ENCODE measurements at regions of chr2 and their contacts with region 1.

Region 1: GRCh38 chr2:210195101-210195852 is 24.1 kb upstream of the KANSL1L start:
- DNase-seq: no peak
- H3K4me3 ChIP-seq: peak overlapping the region in 3 of 4 donors; percentile 16 to 34 (median 18)
- H3K27ac ChIP-seq: no peak overlapping the region
- H3K4me1 ChIP-seq: peaks cover 0 to 14% (median 5%) of the 10 kb centered on the region in 4 donors
- H3K27me3 ChIP-seq: no peaks in the 10 kb centered on the region
- CTCF ChIP-seq: peak; percentile 61 to 76 (median 74)
- EP300 ChIP-seq: no peak
- POLR2A ChIP-seq: no peak

Region 2: GRCh38 chr2:209977386-209978239 is 217.7 kb before region 1 on chr2:
- intact Hi-C with region 1: loop called (anchors 1 kb)
- DNase-seq: no peak
- H3K4me3 ChIP-seq: no peak overlapping the region
- H3K27ac ChIP-seq: no peak overlapping the region
- H3K4me1 ChIP-seq: no peaks in the 10 kb centered on the region
- H3K27me3 ChIP-seq: peaks cover 0 to 4% (median 0%) of the 10 kb centered on the region in 4 donors
- CTCF ChIP-seq: peak; percentile 56 to 66 (median 65)
- EP300 ChIP-seq: no peak
- POLR2A ChIP-seq: no peak

Region 3: DNA sequence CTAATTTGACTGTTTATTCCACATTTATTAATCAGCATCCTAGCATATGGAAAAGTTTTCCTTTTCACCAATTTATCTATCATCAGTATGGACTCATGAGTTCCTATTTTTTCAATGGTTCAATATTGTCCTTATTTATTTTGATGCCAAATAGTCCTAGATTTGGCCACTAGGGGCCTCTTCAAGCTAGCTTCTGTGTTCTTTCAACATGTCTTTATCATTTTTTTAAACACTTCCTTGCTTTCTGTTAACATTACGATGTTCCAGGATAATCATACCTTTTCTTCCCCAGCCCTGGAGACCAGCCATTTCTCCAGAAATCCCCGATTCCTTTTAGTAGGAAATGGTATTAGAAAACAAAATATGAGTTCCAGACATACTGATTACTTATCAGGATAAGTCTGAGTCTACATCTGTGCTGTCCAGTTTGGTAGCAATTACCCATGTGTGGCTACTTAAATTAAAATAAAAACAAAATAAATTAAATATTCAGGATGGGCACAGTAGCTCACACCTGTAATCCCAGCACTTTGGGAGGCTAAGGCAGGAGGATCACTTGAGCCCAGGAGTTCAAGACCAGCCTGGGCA is 122.3 kb before region 1 on chr2:
- intact Hi-C with region 1: loop called (anchors 2 kb)
- DNase-seq: no peak
- H3K4me3 ChIP-seq: no peak overlapping the region
- H3K27ac ChIP-seq: no peak overlapping the region
- H3K4me1 ChIP-seq: peaks cover 0 to 3% (median 0%) of the 10 kb centered on the region in 4 donors
- H3K27me3 ChIP-seq: no peaks in the 10 kb centered on the region
- CTCF ChIP-seq: peak; percentile 37 to 54 (median 38)
- EP300 ChIP-seq: no peak
- POLR2A ChIP-seq: no peak

Region 4: DNA sequence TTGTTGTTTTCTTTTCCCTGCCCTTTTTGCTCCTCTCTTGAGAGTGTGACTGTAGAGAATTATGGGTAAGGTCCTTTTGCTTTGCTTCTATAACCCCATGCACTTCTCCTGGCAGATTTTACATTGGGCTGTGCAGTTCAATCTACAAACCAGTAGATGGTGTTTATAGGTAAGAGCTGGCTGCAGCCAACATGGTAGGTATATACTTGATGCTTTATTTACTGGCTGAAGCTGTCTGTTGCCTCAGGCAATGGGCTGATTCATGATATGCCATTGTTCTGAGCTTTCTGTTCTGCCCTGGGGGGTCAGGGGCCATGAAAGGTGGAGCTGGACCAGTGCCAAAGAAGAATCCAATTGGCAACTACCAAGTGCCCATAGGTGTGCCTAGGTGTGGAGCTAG is 168.0 kb after region 1 on chr2:
- intact Hi-C with region 1: no loop called
- DNase-seq: no peak
- H3K4me3 ChIP-seq: no peak overlapping the region
- H3K27ac ChIP-seq: no peak overlapping the region
- H3K4me1 ChIP-seq: no peaks in the 10 kb centered on the region
- H3K27me3 ChIP-seq: no peaks in the 10 kb centered on the region
- CTCF ChIP-seq: no peak
- EP300 ChIP-seq: no peak
- POLR2A ChIP-seq: no peak

Measured in esophagus muscularis mucosa (tissue), 4 donors.